ENCODE measurements at regions of chr6 and their contacts with region 1.

Region 1: GRCh38 chr6:26045065-26045927 is 41.9 kb upstream of the HFE start:
- DNase-seq: peak; percentile 88 to 91 (median 90)
- H3K4me3 ChIP-seq: peak overlapping the region; percentile 72 to 74
- H3K4me3 Mint-ChIP-seq: peak overlapping the region; percentile 88 to 98 (median 94)
- H3K27ac ChIP-seq: peak overlapping the region; percentile 76
- H3K27ac Mint-ChIP-seq: peak overlapping the region; percentile 93 to 99 (median 98)
- H3K4me1 ChIP-seq: peaks cover 14% of the 10 kb centered on the region
- H3K4me1 Mint-ChIP-seq: peaks cover 12 to 28% (median 20%) of the 10 kb centered on the region in 4 donors
- H3K27me3 ChIP-seq: no peaks in the 10 kb centered on the region
- H3K27me3 Mint-ChIP-seq: no peaks in the 10 kb centered on the region

Region 2: GRCh38 chr6:26020329-26021000 is 24.8 kb before region 1 on chr6:
- CTCF ChIA-PET with region 1: interaction called, 144 read pairs
- POLR2A ChIA-PET with region 1: interaction called, 1,198 read pairs
- intact Hi-C with region 1: loop called (anchors 1 kb)
- DNase-seq: peak; percentile 85 to 92 (median 91)
- H3K4me3 ChIP-seq: peak overlapping the region; percentile 82 to 87
- H3K4me3 Mint-ChIP-seq: peak overlapping the region; percentile 92 to 98 (median 96)
- H3K27ac ChIP-seq: peak overlapping the region; percentile 96
- H3K27ac Mint-ChIP-seq: peak overlapping the region; percentile 96 to 100 (median 100)
- H3K4me1 ChIP-seq: peaks cover 29% of the 10 kb centered on the region
- H3K4me1 Mint-ChIP-seq: peaks cover 14 to 58% (median 32%) of the 10 kb centered on the region in 4 donors
- H3K27me3 ChIP-seq: no peaks in the 10 kb centered on the region
- H3K27me3 Mint-ChIP-seq: peaks cover 0 to 1% of the 10 kb centered on the region in 2 donors

Region 3: DNA sequence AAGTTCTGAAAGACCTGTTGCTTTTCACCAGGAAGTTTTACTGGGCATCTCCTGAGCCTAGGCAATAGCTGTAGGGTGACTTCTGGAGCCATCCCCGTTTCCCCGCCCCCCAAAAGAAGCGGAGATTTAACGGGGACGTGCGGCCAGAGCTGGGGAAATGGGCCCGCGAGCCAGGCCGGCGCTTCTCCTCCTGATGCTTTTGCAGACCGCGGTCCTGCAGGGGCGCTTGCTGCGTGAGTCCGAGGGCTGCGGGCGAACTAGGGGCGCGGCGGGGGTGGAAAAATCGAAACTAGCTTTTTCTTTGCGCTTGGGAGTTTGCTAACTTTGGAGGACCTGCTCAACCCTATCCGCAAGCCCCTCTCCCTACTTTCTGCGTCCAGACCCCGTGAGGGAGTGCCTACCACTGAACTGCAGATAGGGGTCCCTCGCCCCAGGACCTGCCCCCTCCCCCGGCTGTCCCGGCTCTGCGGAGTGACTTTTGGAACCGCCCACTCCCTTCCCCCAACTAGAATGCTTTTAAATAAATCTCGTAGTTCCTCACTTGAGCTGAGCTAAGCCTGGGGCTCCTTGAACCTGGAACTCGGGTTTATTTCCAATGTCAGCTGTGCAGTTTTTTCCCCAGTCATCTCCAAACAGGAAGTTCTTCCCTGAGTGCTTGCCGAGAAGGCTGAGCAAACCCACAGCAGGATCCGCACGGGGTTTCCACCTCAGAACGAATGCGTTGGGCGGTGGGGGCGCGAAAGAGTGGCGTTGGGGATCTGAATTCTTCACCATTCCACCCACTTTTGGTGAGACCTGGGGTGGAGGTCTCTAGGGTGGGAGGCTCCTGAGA is 42.2 kb after region 1 on chr6 and contains the start of gene HFE:
- CTCF ChIA-PET with region 1: interaction called, 5 read pairs
- POLR2A ChIA-PET with region 1: interaction called, 30 read pairs
- intact Hi-C with region 1: no loop called
- DNase-seq: peak in 4 of 5 donors; percentile 24 to 43 (median 26)
- H3K4me3 ChIP-seq: peak within 1 kb of the TSS; percentile 67 to 79
- H3K4me3 Mint-ChIP-seq: peak within 1 kb of the TSS; percentile 77 to 93 (median 90)
- H3K27ac ChIP-seq: peak within 1 kb of the TSS; percentile 68
- H3K27ac Mint-ChIP-seq: peak within 1 kb of the TSS; percentile 71 to 94 (median 90)
- H3K4me1 ChIP-seq: peaks cover 36% of the 10 kb centered on the region
- H3K4me1 Mint-ChIP-seq: peaks cover 20 to 41% (median 28%) of the 10 kb centered on the region in 4 donors
- H3K27me3 ChIP-seq: no peaks in the 10 kb centered on the region
- H3K27me3 Mint-ChIP-seq: no peaks in the 10 kb centered on the region
- total RNA-seq, gene HFE: 3.5 to 4.2 TPM

Region 4: DNA sequence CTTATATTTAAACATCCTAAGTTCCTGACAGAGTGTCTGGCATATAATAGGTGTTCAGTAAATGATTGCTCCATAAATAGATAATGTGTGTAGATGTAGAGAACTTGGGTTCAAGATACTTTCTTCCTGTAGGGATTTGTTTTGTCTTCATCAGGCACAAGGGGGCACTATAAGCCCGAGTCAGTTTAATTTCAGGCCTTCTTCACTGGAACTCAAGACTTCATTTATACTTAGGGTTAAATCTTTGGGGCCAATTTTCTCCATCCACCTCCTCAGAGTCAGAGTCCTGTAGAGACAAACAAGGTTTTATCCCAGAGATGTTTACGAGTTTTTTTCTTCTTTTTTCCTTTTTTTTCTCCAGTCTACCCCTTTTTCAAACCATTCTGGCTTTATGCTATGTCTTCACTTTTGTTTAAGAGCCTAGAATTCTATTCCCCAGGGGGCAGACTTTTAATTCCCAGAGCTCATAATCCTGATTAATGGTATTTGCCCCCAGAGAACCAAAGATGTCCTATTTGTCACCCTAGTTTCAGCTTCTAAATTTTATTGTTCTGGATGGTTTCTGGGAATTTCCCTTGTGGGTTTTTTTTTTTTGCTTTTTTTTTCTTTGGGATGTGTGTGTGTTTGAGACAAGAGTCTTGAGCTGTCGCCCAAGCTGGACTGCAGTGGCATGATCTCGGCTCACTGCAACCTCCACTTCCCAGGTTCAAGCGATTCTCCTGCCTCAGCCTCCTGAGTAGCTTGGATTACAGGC is 130.3 kb after region 1 on chr6:
- CTCF ChIA-PET with region 1: interaction called, 3 read pairs
- POLR2A ChIA-PET with region 1: interaction called, 26 read pairs
- intact Hi-C with region 1: no loop called
- DNase-seq: peak; percentile 50 to 73 (median 70)
- H3K4me3 ChIP-seq: no peak overlapping the region
- H3K4me3 Mint-ChIP-seq: peak overlapping the region in 4 of 8 donors; percentile 37 to 70 (median 65)
- H3K27ac ChIP-seq: no peak overlapping the region
- H3K27ac Mint-ChIP-seq: peak overlapping the region; percentile 28 to 89 (median 78)
- H3K4me1 ChIP-seq: peaks cover 37% of the 10 kb centered on the region
- H3K4me1 Mint-ChIP-seq: peaks cover 21 to 40% (median 27%) of the 10 kb centered on the region in 4 donors
- H3K27me3 ChIP-seq: no peaks in the 10 kb centered on the region
- H3K27me3 Mint-ChIP-seq: no peaks in the 10 kb centered on the region

Region 5: DNA sequence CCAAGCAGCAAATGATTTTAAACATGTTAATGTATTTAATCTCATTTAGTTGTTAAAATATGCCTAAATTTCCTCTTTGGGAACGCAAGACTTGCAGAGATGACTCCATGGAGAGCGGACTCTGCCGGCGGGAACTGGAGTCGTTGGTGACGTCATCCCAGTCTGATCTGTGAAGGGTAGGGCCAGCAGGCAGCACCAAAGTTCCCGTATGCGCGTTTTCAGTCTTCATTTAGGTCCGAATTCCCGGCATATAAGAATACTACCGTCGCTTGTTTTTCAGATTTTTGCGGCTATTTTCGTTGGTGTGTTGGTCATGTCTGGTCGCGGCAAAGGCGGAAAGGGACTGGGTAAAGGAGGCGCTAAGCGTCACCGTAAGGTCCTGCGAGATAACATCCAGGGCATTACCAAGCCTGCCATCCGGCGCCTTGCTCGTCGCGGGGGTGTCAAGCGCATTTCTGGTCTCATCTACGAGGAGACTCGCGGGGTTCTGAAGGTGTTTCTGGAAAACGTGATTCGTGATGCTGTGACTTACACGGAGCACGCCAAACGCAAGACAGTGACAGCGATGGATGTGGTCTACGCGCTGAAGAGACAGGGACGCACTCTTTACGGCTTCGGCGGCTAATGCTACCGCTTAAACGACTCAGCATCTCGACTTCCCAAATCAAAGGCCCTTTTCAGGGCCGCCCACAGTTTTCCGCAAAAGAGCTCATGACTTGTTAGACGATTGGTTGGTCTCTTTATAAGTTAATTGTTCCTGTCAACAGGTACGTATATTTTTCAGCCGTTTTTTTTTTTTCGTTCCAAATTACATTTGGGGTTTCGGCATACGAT is 159.3 kb after region 1 on chr6:
- CTCF ChIA-PET with region 1: no interaction called
- POLR2A ChIA-PET with region 1: interaction called, 120 read pairs
- intact Hi-C with region 1: no loop called
- DNase-seq: peak; percentile 85 to 95 (median 89)
- H3K4me3 ChIP-seq: peak overlapping the region; percentile 48 to 87
- H3K4me3 Mint-ChIP-seq: no peak overlapping the region
- H3K27ac ChIP-seq: peak overlapping the region; percentile 82
- H3K27ac Mint-ChIP-seq: no peak overlapping the region
- H3K4me1 ChIP-seq: peaks cover 39% of the 10 kb centered on the region
- H3K4me1 Mint-ChIP-seq: peaks cover 8 to 26% (median 13%) of the 10 kb centered on the region in 4 donors
- H3K27me3 ChIP-seq: no peaks in the 10 kb centered on the region
- H3K27me3 Mint-ChIP-seq: peaks cover 0 to 3% of the 10 kb centered on the region in 2 donors

Region 6: DNA sequence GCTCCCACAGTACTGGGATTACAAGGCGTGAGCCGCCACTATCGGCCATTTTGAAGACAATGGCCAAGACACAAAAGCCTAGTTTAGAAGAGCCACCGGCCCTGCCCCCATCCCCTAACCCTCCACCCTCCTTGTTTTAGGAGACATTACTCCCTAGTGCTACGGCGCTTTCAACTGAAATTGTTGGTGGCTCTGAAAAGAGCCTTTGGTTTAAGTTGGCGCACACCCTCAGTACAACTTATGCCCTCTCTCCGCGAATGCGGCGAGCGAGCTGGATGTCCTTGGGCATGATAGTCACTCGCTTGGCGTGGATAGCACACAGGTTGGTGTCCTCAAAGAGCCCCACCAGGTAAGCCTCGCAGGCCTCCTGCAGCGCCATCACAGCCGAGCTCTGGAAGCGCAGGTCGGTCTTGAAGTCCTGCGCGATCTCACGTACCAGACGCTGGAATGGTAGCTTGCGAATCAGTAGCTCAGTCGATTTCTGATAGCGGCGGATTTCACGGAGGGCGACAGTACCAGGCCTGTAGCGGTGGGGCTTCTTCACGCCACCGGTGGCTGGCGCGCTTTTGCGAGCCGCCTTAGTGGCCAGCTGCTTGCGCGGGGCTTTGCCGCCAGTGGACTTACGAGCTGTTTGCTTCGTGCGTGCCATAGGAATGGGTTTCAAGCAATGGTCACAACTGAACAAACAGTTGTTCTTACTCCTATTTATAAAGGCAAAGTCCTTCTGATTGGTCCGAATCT is 204.8 kb after region 1 on chr6:
- CTCF ChIA-PET with region 1: interaction called, 3 read pairs
- POLR2A ChIA-PET with region 1: interaction called, 13 read pairs
- intact Hi-C with region 1: no loop called
- DNase-seq: peak; percentile 79 to 88 (median 83)
- H3K4me3 ChIP-seq: peak overlapping the region; percentile 86 to 88
- H3K4me3 Mint-ChIP-seq: peak overlapping the region; percentile 92 to 99 (median 98)
- H3K27ac ChIP-seq: peak overlapping the region; percentile 59
- H3K27ac Mint-ChIP-seq: peak overlapping the region; percentile 85 to 97 (median 94)
- H3K4me1 ChIP-seq: peaks cover 25% of the 10 kb centered on the region
- H3K4me1 Mint-ChIP-seq: peaks cover 28 to 53% (median 40%) of the 10 kb centered on the region in 4 donors
- H3K27me3 ChIP-seq: no peaks in the 10 kb centered on the region
- H3K27me3 Mint-ChIP-seq: no peaks in the 10 kb centered on the region

Region 7: DNA sequence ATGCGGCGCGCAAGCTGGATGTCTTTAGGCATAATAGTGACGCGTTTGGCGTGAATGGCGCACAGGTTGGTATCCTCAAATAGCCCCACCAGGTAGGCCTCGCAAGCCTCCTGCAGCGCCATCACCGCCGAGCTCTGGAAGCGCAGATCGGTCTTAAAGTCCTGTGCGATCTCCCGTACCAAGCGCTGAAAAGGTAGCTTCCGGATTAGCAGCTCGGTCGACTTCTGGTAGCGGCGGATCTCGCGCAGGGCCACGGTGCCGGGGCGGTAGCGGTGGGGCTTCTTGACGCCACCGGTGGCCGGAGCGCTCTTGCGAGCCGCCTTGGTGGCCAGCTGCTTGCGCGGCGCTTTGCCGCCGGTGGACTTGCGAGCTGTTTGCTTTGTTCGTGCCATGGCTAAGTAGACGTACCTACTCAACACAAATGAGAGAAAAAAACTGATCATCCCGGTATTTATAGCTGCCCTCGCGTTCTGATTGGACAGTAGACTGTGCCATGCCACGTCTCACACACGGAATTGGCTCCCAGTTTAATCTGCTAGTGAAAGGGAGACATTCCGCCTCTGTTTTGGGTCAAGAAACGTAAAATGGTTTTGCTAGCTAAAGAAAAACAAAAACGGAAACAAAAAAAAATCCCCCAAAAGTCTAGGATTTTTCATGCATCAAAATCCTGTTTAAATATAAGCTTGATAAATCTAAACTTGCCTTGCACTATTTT is 1826.8 kb after region 1 on chr6:
- CTCF ChIA-PET with region 1: interaction called, 3 read pairs
- POLR2A ChIA-PET with region 1: interaction called, 35 read pairs
- intact Hi-C with region 1: no loop called
- DNase-seq: peak; percentile 91 to 96 (median 94)
- H3K4me3 ChIP-seq: peak overlapping the region; percentile 77 to 89
- H3K4me3 Mint-ChIP-seq: peak overlapping the region; percentile 87 to 94 (median 90)
- H3K27ac ChIP-seq: peak overlapping the region; percentile 86
- H3K27ac Mint-ChIP-seq: peak overlapping the region; percentile 89 to 97 (median 94)
- H3K4me1 ChIP-seq: peaks cover 33% of the 10 kb centered on the region
- H3K4me1 Mint-ChIP-seq: peaks cover 24 to 48% (median 33%) of the 10 kb centered on the region in 4 donors
- H3K27me3 ChIP-seq: no peaks in the 10 kb centered on the region
- H3K27me3 Mint-ChIP-seq: no peaks in the 10 kb centered on the region